ENCODE measurements at regions of chr12 and their contacts with region 1.

Region 1: DNA sequence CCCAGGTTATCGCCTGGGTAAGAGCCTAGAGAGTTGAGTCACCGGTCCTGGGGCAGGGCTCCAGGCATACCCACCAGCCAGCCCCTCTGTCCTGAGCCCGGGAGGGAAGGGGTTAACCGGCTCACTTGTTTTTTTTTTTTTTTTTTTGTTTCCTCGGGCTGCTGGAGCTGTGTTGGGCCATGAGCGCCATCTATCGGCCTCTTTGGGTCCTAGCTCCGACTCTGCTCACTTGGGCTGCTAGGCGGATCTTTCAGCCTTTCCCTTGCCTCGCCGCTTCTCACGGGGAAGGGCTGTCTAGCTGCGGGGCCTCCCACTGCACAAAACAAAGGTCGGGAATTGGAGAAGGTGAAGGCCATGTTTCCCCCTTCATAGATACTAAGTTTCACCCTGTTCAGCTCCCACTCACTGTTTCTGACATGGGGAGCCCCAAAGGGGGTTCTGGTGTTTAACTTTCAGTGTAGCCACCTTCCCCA is 2.8 kb upstream of the SMUG1 start:
- DNase-seq: peak; percentile 84 to 92 (median 88)
- ATAC-seq: peak; percentile 74
- H3K4me3 ChIP-seq: no peak overlapping the region
- H3K27ac ChIP-seq: no peak overlapping the region
- H3K4me1 ChIP-seq: peaks cover 26 to 29% of the 10 kb centered on the region in 2 experiments
- H3K27me3 ChIP-seq: no peaks in the 10 kb centered on the region
- CTCF ChIP-seq: peak; percentile 92 to 97 (median 93)
- EP300 ChIP-seq: peak; percentile 40; the same call in 1 of the 2 replicates
- POLR2A ChIP-seq: no peak
- RAD21 ChIP-seq: peak; percentile 71 to 79

Region 2: GRCh38 chr12:53999559-54000104 is 192.0 kb before region 1 on chr12:
- CTCF ChIA-PET with region 1: interaction called, 17 read pairs
- POLR2A ChIA-PET with region 1: interaction called, 3 read pairs
- in situ Hi-C with region 1: no loop called
- intact Hi-C with region 1: loop called (anchors 1 kb)
- DNase-seq: peak; percentile 77 to 91 (median 82)
- ATAC-seq: peak; percentile 23
- H3K4me3 ChIP-seq: peak overlapping the region; percentile 71
- H3K27ac ChIP-seq: peak overlapping the region; percentile 94
- H3K4me1 ChIP-seq: peaks cover 38 to 78% of the 10 kb centered on the region in 2 experiments
- H3K27me3 ChIP-seq: no peaks in the 10 kb centered on the region
- CTCF ChIP-seq: no peak
- EP300 ChIP-seq: no peak
- POLR2A ChIP-seq: no peak
- RAD21 ChIP-seq: no peak

Region 3: GRCh38 chr12:54017878-54018467 is 173.6 kb before region 1 on chr12:
- CTCF ChIA-PET with region 1: no interaction called
- POLR2A ChIA-PET with region 1: interaction called, 7 read pairs
- in situ Hi-C with region 1: loop called (anchors 10 kb)
- intact Hi-C with region 1: no loop called
- DNase-seq: peak; percentile 95 to 98 (median 98)
- ATAC-seq: peak; percentile 88
- H3K4me3 ChIP-seq: peak overlapping the region; percentile 60
- H3K27ac ChIP-seq: peak overlapping the region; percentile 86
- H3K4me1 ChIP-seq: peaks cover 10 to 47% of the 10 kb centered on the region in 2 experiments
- H3K27me3 ChIP-seq: no peaks in the 10 kb centered on the region
- CTCF ChIP-seq: no peak
- EP300 ChIP-seq: no peak
- POLR2A ChIP-seq: peak; percentile 78
- RAD21 ChIP-seq: no peak

Region 4: GRCh38 chr12:54032627-54033100 is 158.9 kb before region 1 on chr12 and contains the start of gene HOXC5:
- CTCF ChIA-PET with region 1: interaction called, 27 read pairs
- POLR2A ChIA-PET with region 1: interaction called, 4 read pairs
- in situ Hi-C with region 1: loop called (anchors 10 kb)
- intact Hi-C with region 1: loop called (anchors 1 kb)
- DNase-seq: peak; percentile 82 to 86 (median 84)
- ATAC-seq: peak; percentile 70
- H3K4me3 ChIP-seq: no peak within 1 kb of the TSS
- H3K27ac ChIP-seq: no peak within 1 kb of the TSS
- H3K4me1 ChIP-seq: peaks cover 0 to 28% of the 10 kb centered on the region in 2 experiments; a peak in 2 of 5 replicates
- H3K27me3 ChIP-seq: no peaks in the 10 kb centered on the region
- CTCF ChIP-seq: peak; percentile 95 to 96 (median 95)
- EP300 ChIP-seq: 0 out of 2 replicates have a peak, but pooled peaks have one; percentile 17
- POLR2A ChIP-seq: no peak
- RAD21 ChIP-seq: peak; percentile 80 to 89
- polyA plus RNA-seq, gene HOXC5: not detected

Region 5: DNA sequence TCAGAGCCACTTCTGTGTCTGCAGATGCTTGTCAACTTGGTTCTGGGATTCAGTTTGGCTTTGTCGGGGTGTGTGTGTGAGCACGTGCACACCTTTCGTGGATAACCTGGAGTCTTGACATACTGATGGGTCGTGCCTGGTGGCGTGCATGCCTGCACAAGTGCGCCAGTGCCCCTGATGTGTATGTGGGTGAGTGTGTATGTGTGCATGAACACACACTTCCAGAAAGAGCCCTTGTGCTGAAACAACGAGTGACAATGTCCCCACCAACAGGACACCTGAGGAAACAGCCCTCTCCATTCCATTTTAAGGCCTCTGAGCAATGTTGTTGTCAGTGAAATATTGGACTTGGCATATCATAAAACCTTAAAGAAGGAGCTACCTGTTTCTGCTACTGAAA is 56.7 kb before region 1 on chr12:
- CTCF ChIA-PET with region 1: interaction called, 3 read pairs
- POLR2A ChIA-PET with region 1: no interaction called
- in situ Hi-C with region 1: no loop called
- intact Hi-C with region 1: loop called (anchors 2 kb)
- DNase-seq: peak in 1 of 4 experiments; percentile 29
- ATAC-seq: peak; percentile 72
- H3K4me3 ChIP-seq: no peak overlapping the region
- H3K27ac ChIP-seq: no peak overlapping the region
- H3K4me1 ChIP-seq: no peaks in the 10 kb centered on the region
- H3K27me3 ChIP-seq: peaks cover 27 to 72% of the 10 kb centered on the region in 2 experiments; a peak in 4 of 5 replicates
- CTCF ChIP-seq: peak; percentile 31 to 46 (median 42); a peak in 4 of 6 replicates
- EP300 ChIP-seq: no peak
- POLR2A ChIP-seq: no peak
- RAD21 ChIP-seq: peak; percentile 19 to 68; a peak in 3 of 4 replicates

Region 6: GRCh38 chr12:54631988-54632728 is 440.6 kb after region 1 on chr12:
- CTCF ChIA-PET with region 1: no interaction called
- POLR2A ChIA-PET with region 1: no interaction called
- in situ Hi-C with region 1: no loop called
- intact Hi-C with region 1: no loop called
- DNase-seq: peak in 2 of 4 experiments; percentile 34 to 37
- ATAC-seq: no peak
- H3K4me3 ChIP-seq: no peak overlapping the region
- H3K27ac ChIP-seq: no peak overlapping the region
- H3K4me1 ChIP-seq: no peaks in the 10 kb centered on the region
- H3K27me3 ChIP-seq: peaks cover 0 to 16% of the 10 kb centered on the region in 2 experiments; a peak in 2 of 5 replicates
- CTCF ChIP-seq: peak; percentile 3 to 35 (median 34); a peak in 1 of 6 replicates
- EP300 ChIP-seq: no peak
- POLR2A ChIP-seq: no peak
- RAD21 ChIP-seq: no peak

Measured in K562 (cell line).